ENCODE measurements at regions of chr14 and their contacts with region 1.

Region 1: GRCh38 chr14:21003788-21004346 is 4.8 kb downstream of the SLC39A2 start:
- DNase-seq: no peak
- H3K4me3 ChIP-seq: no peak overlapping the region
- H3K27ac ChIP-seq: no peak overlapping the region
- H3K4me1 ChIP-seq: peaks cover 5% of the 10 kb centered on the region
- H3K27me3 ChIP-seq: no peaks in the 10 kb centered on the region
- CTCF ChIP-seq: no peak

Region 2: GRCh38 chr14:21084988-21085853 is 81.4 kb after region 1 on chr14:
- CTCF ChIA-PET with region 1: interaction called, 10 read pairs
- dilution Hi-C with region 1: no loop called
- in situ Hi-C with region 1: no loop called
- intact Hi-C with region 1: no loop called
- DNase-seq: peak; percentile 59
- H3K4me3 ChIP-seq: no peak overlapping the region
- H3K27ac ChIP-seq: peak overlapping the region; percentile 39
- H3K4me1 ChIP-seq: peaks cover 17% of the 10 kb centered on the region
- H3K27me3 ChIP-seq: no peaks in the 10 kb centered on the region
- CTCF ChIP-seq: no peak

Measured in mammary epithelial cell (primary cell).